A673 (cell line): ENCODE measurements at regions of chr10 and their contacts with region 1.

Region 1: DNA sequence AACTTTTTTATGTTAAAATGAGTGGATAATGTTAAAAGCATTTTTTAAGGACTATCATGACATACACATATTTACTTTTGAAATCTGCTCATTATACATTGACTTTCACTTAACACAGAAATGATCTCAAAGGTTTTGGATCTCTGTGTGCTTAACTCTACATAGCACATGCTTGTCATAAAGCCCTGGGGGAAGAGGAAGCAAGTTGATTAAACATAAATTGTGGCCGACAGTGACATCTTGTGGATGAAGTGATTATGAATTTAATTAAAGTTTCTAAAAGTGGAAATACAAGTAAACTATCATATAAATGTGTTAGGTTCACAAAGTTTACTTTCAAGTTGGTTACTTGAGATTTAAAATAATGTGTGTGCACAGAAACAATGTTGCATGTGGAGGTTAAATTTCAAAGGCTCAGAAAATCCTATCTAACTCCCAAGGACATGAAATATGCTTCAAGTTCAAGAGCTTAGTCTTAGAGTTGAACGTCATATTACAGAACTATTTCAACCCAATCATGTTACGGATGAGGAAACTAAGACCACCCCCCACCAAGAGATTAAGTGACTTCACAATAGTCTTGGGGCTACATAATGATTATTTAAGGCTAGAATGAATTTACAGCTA is 1247.7 kb downstream of the GATA3 start:
- DNase-seq: peak; percentile 74
- H3K4me3 ChIP-seq: no peak overlapping the region
- H3K27ac ChIP-seq: no peak overlapping the region
- H3K4me1 ChIP-seq: no peaks in the 10 kb centered on the region
- H3K27me3 ChIP-seq: no peaks in the 10 kb centered on the region
- CTCF ChIP-seq: peak; percentile 53

Region 2: DNA sequence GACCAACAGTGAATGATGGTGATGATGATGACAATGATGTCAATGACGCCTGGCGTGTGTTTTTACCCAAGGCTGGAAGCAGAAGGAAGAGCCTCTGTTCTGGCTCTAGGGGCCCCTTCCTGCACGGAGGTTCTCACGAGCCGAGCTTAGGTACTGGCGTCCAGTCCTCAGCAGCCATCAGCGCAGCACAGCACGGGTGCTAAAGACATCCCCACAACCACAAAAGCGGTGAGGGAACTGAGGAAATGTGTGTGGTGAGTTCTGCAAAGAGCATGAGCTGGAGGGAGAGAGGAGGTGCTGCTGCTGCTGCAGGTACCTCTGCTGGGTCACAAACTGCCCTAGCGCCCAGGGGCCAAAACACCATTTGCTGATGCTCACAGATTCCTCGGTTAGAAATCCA is 1973.0 kb before region 1 on chr10:
- CTCF ChIA-PET with region 1: no interaction called
- POLR2A ChIA-PET with region 1: no interaction called
- intact Hi-C with region 1: no loop called
- DNase-seq: no peak
- H3K4me3 ChIP-seq: no peak overlapping the region
- H3K27ac ChIP-seq: no peak overlapping the region
- H3K4me1 ChIP-seq: no peaks in the 10 kb centered on the region
- H3K27me3 ChIP-seq: no peaks in the 10 kb centered on the region
- CTCF ChIP-seq: no peak

Region 3: DNA sequence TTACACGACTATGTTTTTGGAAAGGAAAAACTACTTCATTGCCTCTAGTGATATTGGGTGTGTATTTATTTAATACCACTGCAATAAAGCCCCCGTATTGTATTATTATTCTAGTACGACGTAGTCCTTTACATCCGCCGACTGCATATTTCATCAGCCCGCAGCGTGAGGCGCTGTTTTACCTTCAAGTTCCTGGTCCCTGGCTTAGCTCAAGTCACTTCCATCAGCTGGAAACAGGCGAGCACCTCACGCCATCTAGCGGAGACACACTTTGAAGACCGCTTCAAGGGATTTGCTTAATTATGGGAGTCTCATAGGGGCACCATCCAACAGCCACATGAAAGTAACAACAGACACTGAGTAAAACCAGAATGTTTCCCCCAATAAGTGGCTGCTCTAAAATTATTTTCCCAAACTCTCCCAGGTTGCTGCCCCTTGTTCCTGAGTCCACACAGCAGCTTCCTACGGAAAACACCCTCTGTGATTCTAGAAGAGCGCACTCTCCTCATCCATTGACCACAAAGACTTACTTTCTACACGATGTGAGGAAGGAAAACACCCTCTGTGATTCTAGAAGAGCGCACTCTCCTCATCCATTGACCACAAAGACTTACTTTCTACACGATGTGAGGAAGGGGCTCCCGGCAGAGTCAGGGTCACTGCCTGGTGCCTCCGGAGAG is 1614.9 kb before region 1 on chr10:
- CTCF ChIA-PET with region 1: no interaction called
- POLR2A ChIA-PET with region 1: no interaction called
- intact Hi-C with region 1: loop called (anchors 5 kb)
- DNase-seq: peak; percentile 92
- H3K4me3 ChIP-seq: no peak overlapping the region
- H3K27ac ChIP-seq: no peak overlapping the region
- H3K4me1 ChIP-seq: no peaks in the 10 kb centered on the region
- H3K27me3 ChIP-seq: no peaks in the 10 kb centered on the region
- CTCF ChIP-seq: peak; percentile 96

Region 4: GRCh38 chr10:7756360-7756992 is 1545.8 kb before region 1 on chr10:
- CTCF ChIA-PET with region 1: no interaction called
- POLR2A ChIA-PET with region 1: no interaction called
- intact Hi-C with region 1: loop called (anchors 2 kb)
- DNase-seq: peak; percentile 37
- H3K4me3 ChIP-seq: no peak overlapping the region
- H3K27ac ChIP-seq: no peak overlapping the region
- H3K4me1 ChIP-seq: no peaks in the 10 kb centered on the region
- H3K27me3 ChIP-seq: no peaks in the 10 kb centered on the region
- CTCF ChIP-seq: peak; percentile 62

Region 5: DNA sequence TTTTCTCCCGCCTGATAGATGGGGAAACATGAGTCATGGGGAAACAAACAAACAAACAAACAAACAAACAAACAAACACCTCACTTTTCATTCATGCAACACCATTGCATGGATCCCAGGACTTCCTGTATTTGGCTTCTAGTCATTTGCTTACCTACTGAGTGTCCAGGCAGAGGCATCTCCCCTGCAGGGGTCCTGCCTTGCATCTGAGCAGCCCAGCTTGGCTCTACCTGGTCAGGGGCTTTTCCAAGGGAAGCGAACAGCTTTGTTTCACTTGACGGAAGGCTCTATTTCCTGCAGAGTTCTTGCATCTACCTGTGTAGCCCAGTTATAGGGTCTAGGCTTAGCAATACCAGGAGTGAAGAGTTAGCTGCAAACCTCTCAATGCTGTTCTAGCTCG is 873.6 kb before region 1 on chr10:
- CTCF ChIA-PET with region 1: no interaction called
- POLR2A ChIA-PET with region 1: no interaction called
- intact Hi-C with region 1: no loop called
- DNase-seq: no peak
- H3K4me3 ChIP-seq: no peak overlapping the region
- H3K27ac ChIP-seq: no peak overlapping the region
- H3K4me1 ChIP-seq: no peaks in the 10 kb centered on the region
- H3K27me3 ChIP-seq: no peaks in the 10 kb centered on the region
- CTCF ChIP-seq: no peak